Vagina (tissue), 2 donors: ENCODE measurements at regions of chr22 and their contacts with region 1.

Region 1: GRCh38 chr22:19016081-19016766 is 80.1 kb upstream of the PRODH start:
- DNase-seq: no peak
- H3K4me3 ChIP-seq: no peak overlapping the region
- H3K27ac ChIP-seq: no peak overlapping the region
- H3K4me1 ChIP-seq: no peaks in the 10 kb centered on the region
- H3K27me3 ChIP-seq: no peaks in the 10 kb centered on the region
- CTCF ChIP-seq: no peak
- POLR2A ChIP-seq: no peak

Region 2: GRCh38 chr22:18954990-18955571 is 61.1 kb before region 1 on chr22:
- intact Hi-C with region 1: no loop called
- DNase-seq: no peak
- H3K4me3 ChIP-seq: no peak overlapping the region
- H3K27ac ChIP-seq: no peak overlapping the region
- H3K4me1 ChIP-seq: no peaks in the 10 kb centered on the region
- H3K27me3 ChIP-seq: no peaks in the 10 kb centered on the region
- CTCF ChIP-seq: no peak
- POLR2A ChIP-seq: no peak

Region 3: DNA sequence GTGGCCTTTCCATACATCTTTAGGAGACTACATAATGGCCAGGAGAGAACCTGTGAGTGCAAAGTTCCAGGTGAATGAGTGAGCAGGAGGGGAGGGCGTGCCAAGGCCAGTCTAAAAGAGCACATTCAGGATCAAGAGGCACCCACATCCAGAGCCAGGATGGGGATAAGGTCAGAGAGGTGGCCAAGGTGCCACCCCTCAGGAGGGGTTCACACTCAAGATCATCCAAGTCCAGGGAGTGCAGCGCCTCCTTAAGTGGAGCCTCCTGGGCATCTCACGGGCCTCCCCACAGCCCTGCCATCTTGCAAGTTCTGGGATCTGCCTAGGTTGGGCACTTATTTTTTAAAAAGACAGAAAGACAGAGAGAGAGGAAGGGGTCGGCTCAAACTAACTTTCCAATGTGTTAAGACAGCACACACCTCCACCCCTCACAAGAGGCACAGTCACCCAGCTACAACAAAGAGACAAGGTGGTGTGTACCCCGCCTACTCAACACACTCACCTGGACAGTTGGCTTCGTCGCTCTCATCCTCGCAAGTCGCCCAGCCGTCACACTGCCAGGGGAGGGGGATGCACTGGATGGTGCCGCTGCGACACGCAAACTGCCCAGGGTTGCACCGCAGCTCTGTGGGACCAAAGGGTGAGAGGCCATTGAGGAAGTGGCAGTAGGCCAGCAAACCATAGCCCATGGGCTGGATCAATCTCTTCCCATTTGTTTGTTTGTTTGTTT is 72.8 kb after region 1 on chr22:
- intact Hi-C with region 1: loop called (anchors 2 kb)
- DNase-seq: no peak
- H3K4me3 ChIP-seq: no peak overlapping the region
- H3K27ac ChIP-seq: no peak overlapping the region
- H3K4me1 ChIP-seq: peaks cover 23% of the 10 kb centered on the region
- H3K27me3 ChIP-seq: no peaks in the 10 kb centered on the region
- CTCF ChIP-seq: no peak
- POLR2A ChIP-seq: no peak

Region 4: DNA sequence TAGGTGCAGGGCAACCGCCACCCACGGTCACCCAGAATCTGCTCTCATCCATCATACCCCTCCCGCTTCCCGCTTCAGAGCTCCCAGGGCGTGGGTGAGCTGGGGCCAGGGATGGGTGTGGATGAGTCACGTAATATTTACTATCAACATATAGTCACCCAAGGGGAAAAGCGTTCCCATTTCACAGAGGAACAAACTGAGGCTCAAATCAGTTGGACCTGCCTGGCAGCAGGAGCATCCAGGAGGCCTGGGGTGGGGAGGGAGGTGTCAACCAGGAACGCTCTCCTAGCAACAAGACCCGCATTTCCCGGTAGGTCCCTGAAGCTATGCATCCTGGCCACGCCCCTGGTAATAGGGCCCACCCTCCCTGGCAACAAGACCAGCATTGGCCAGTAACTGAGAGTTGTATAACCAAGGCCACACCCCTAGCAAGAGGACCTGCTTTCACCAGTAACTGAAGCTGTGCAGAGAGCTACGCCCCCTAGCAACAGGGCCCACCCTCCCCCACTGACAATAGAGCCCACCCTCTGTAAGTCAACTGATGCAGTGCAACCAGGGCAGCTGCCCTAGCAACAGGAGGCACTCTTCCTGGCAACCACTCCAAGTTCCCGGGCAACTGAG is 958.1 kb after region 1 on chr22:
- intact Hi-C with region 1: no loop called
- DNase-seq: no peak
- H3K4me3 ChIP-seq: no peak overlapping the region
- H3K27ac ChIP-seq: no peak overlapping the region
- H3K4me1 ChIP-seq: peaks cover 15% of the 10 kb centered on the region
- H3K27me3 ChIP-seq: no peaks in the 10 kb centered on the region
- CTCF ChIP-seq: no peak
- POLR2A ChIP-seq: no peak